GM10248 (cell line): ENCODE measurements at regions of chr19 and their contacts with region 1.

Region 1: GRCh38 chr19:3692141-3693024 is 7.9 kb downstream of the PIP5K1C start:
- DNase-seq: no peak
- CTCF ChIP-seq: peak; percentile 50

Region 2: GRCh38 chr19:3670796-3671679 is 21.3 kb before region 1 on chr19:
- CTCF ChIA-PET with region 1: interaction called, 148 read pairs
- POLR2A ChIA-PET with region 1: interaction called, 3 read pairs
- DNase-seq: peak; percentile 89
- CTCF ChIP-seq: no peak

Region 3: DNA sequence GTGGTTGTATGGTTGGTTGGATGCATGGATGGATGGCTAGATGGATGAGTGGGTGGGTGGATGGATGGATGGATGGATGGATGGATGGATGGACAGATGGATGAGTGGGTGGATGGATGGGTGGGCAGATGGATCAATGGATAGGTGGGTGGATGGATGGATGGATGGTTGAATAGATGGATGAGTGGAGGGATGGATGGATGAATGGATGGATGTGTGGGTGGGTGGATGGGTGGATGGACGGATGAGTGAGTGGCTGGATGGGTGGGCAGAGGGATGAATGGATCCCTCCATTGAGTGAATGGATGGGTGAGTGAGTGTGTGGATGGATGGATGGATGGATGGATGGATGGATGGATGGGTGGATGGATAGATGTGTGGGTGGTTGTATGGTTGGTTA is 231.5 kb after region 1 on chr19:
- CTCF ChIA-PET with region 1: no interaction called
- POLR2A ChIA-PET with region 1: no interaction called
- DNase-seq: no peak
- CTCF ChIP-seq: no peak